ENCODE measurements at regions of chr13 and their contacts with region 1.

Region 1: DNA sequence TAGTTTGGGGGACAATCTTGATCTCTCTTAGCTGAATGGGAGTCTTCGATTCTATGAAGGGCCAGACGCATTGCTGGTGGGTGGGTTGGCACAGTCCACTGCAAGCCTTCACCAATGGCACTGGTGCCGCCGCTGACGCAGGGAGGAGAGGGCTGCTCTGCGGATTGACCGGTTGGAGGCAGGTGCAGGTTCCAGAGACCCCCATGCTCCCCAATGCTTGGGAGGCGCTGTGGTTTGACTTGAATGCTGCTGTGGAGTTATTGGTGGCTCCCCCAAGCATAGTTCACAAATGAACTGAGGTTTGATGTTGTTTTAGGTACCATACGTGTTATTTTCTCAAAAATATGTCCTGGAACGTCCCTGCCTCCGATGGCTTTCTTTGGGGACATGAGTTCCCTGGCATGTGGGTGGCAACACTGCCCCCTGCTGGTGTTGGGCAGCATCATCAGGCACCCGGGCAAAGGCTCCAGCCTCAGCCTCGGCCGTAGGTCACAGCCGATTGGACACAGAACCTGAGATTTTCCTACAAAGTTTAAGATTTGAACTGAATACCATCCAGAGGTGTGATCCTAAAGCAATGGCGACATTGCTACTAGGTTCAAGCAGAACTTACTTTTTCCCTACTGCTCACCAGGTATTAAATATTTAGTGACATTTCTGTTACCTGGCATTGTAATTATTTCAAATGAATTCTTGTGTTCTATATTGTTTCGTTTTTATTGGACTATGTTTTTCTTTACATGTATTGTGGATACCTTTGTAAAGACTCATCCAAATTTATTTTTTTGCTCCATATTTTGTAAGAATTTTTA is 95.5 kb downstream of the ANKRD10 start:
- DNase-seq: peak; percentile 77 to 86
- H3K4me3 ChIP-seq: no peak overlapping the region
- H3K27ac ChIP-seq: no peak overlapping the region
- H3K4me1 ChIP-seq: peaks cover 2 to 5% of the 10 kb centered on the region in 2 donors
- H3K27me3 ChIP-seq: no peaks in the 10 kb centered on the region
- CTCF ChIP-seq: peak; percentile 90 to 97 (median 95)
- POLR2A ChIP-seq: no peak

Region 2: GRCh38 chr13:110463871-110464510 is 355.4 kb before region 1 on chr13:
- intact Hi-C with region 1: loop called (anchors 10 kb)
- DNase-seq: no peak
- H3K4me3 ChIP-seq: no peak overlapping the region
- H3K27ac ChIP-seq: no peak overlapping the region
- H3K4me1 ChIP-seq: no peaks in the 10 kb centered on the region
- H3K27me3 ChIP-seq: no peaks in the 10 kb centered on the region
- CTCF ChIP-seq: no peak
- POLR2A ChIP-seq: no peak

Region 3: GRCh38 chr13:110561344-110562035 is 257.9 kb before region 1 on chr13 and contains the start of gene RAB20:
- intact Hi-C with region 1: no loop called
- DNase-seq: peak; percentile 89 to 91
- H3K4me3 ChIP-seq: peak within 1 kb of the TSS; percentile 46 to 93 (median 74)
- H3K27ac ChIP-seq: peak within 1 kb of the TSS; percentile 96 to 100 (median 98)
- H3K4me1 ChIP-seq: peaks cover 52 to 65% of the 10 kb centered on the region in 2 donors
- H3K27me3 ChIP-seq: no peaks in the 10 kb centered on the region
- CTCF ChIP-seq: no peak
- POLR2A ChIP-seq: peak; percentile 78 to 85
- total RNA-seq, gene RAB20: 21.0 to 60.5 (median 43.5) TPM

Region 4: DNA sequence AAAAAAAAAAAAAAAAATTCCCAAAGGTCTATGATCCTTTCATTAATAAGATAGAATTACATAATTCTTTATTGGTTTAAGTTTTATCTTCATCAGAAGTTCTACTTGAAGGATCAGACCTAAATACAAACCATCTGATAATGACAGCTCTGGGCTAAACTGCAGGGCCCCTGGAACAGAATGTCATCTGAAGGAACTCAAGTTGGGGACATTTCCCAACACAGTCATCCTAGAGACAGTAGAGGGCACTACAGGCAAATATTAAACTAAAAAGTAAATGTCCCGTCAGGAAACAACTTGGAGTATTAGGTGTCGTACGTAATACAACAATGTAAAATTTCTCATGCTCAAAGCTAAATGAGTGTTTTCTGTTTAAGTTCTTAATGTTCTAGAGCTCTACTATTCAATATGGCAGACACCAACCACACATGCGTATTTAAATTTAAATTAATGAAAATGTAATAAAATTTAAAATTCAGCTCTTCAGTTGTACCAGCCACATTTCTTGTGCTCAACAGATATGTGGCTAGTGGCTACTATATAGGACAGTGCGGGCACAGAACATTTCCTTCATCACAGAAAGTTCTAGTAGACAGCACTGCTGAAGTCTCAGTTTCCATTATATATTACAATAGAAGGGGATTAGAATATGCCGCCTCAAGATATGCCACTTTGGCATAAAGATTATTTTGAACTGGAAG is 225.8 kb before region 1 on chr13:
- intact Hi-C with region 1: loop called (anchors 5 kb)
- DNase-seq: peak; percentile 27
- H3K4me3 ChIP-seq: no peak overlapping the region
- H3K27ac ChIP-seq: no peak overlapping the region
- H3K4me1 ChIP-seq: no peaks in the 10 kb centered on the region
- H3K27me3 ChIP-seq: no peaks in the 10 kb centered on the region
- CTCF ChIP-seq: peak; percentile 15 to 82 (median 72)
- POLR2A ChIP-seq: no peak

Region 5: DNA sequence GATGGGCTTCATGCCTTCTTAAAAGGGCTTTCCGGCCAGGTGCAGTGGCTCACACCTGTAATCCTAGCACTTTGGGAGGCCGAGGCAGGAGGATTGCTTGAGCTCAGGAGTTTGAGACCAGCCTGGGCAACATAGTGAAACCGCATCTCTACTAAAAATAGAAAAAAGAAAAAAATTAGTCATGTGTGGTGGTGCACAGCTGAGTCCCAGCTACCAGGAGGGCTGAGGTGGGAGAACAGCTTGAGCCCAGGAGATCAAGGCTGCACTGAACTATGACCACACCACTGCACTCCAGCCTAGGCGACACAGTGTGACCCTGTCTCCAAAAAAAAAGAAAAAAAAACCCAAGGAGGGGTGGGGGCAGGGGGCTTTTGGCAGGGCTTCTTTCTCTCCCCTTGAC is 120.7 kb before region 1 on chr13:
- intact Hi-C with region 1: loop called (anchors 10 kb)
- DNase-seq: no peak
- H3K4me3 ChIP-seq: no peak overlapping the region
- H3K27ac ChIP-seq: no peak overlapping the region
- H3K4me1 ChIP-seq: peaks cover 0 to 6% of the 10 kb centered on the region in 2 donors
- H3K27me3 ChIP-seq: no peaks in the 10 kb centered on the region
- CTCF ChIP-seq: no peak
- POLR2A ChIP-seq: no peak

Measured in thyroid gland (tissue), 4 donors.